Natural killer cell (primary cell): ENCODE measurements at regions of chr14 and their contacts with region 1.

Region 1: DNA sequence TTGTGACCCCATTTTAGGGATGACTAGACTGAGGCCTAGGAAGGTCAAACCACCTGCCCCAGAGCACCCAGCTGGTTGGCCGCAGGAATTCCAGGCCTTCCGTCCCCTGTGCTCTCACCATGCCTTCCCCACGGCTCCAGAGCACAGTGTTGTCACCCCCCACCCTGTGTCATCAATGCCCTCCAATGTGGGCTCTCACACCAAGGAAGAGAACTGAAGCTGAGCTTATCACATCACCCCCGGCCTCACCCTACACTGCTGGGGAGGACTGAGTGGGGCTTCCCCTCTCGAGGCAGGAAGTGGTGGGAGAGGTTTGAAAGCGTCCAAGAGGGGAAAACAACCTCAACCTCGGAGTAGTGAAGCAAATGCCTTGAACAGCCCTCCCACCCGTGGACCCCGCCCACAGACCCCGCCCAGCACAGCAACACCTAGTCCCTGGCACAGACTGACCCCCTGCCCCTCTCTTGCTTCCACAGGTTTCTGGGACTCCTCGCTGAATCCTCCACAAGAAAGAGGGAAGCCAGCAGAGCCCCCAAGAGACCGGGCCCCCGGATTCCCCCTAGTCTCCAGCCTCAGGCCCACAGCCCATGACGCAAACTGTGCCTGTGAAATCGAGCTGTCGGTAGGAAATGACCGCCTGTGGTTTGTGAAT is 97.2 kb downstream of the LGMN start:
- DNase-seq: peak; percentile 83 to 93
- ATAC-seq: peak; percentile 66 to 88 (median 77)
- H3K4me3 ChIP-seq: peak overlapping the region; percentile 72
- H3K4me3 Mint-ChIP-seq: peak overlapping the region; percentile 90
- H3K27ac ChIP-seq: peak overlapping the region; percentile 99
- H3K27ac Mint-ChIP-seq: peak overlapping the region; percentile 96 to 99
- H3K4me1 ChIP-seq: peaks cover 94% of the 10 kb centered on the region
- H3K4me1 Mint-ChIP-seq: peaks cover 75 to 95% of the 10 kb centered on the region in 2 donors
- H3K27me3 ChIP-seq: no peaks in the 10 kb centered on the region
- H3K27me3 Mint-ChIP-seq: no peaks in the 10 kb centered on the region
- CTCF ChIP-seq: no peak

Region 2: DNA sequence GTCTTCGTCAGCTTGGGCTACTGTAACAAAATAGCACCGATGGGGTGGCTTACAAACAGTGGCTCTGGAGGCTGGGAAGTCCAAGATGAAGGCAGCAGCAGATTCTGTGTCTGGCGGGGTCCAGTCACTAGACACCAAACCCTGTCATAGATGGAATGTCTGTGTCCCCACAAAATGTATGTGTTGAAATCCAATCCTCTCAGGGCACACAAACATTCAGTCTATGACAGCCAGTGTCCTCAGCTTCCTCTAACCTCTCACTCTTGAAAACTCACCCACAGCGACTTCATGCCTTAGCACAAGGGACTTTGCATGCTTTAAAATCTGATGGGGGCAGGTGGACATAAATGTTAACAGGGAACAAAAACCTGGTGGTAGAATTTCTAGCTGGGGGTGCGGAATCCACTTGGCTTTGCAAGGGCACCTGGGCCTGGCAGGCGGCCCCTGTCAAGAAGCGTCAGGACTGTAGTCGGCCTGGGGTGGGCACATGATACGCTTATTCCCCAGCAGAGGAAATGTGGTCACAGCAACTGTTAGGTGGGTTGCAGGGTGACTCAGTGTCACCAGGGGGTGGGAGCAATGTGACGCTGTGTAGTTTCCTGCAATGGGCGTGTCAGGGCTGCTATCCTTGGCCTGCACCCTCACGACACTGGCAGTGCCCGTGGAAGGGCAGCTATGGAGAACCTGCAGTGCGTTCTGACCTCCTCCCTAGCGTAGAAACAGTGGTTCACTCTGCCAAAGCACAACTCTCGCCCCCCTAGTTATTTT is 119.9 kb before region 1 on chr14:
- intact Hi-C with region 1: loop called (anchors 1 kb)
- DNase-seq: peak; percentile 86 to 91
- ATAC-seq: peak; percentile 76 to 93 (median 93)
- H3K4me3 ChIP-seq: no peak overlapping the region
- H3K4me3 Mint-ChIP-seq: peak overlapping the region; percentile 89
- H3K27ac ChIP-seq: peak overlapping the region; percentile 98
- H3K27ac Mint-ChIP-seq: peak overlapping the region; percentile 98 to 99
- H3K4me1 ChIP-seq: peaks cover 87% of the 10 kb centered on the region
- H3K4me1 Mint-ChIP-seq: peaks cover 75 to 92% of the 10 kb centered on the region in 2 donors
- H3K27me3 ChIP-seq: no peaks in the 10 kb centered on the region
- H3K27me3 Mint-ChIP-seq: no peaks in the 10 kb centered on the region
- CTCF ChIP-seq: no peak

Region 3: DNA sequence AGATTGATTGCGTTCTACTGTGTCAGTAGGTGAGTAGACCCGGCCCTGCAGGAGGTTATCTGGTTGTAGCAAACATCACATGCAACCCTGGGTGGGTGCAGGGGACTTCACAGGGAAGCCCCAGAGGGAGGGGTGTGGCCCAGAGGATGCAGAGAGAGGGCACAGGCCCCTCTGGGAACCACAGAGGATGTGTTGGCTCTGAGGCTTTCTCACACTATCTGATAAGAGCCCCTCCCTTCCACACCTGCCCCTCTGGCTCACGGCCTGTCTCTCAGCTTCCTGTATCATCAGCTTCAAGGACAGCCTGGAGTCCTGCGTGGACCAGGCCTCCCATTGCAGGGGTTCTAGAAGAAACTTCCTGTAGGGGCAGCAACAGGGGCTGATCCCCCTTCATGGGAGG is 35.8 kb before region 1 on chr14:
- intact Hi-C with region 1: loop called (anchors 1 kb)
- DNase-seq: peak; percentile 75 to 93
- ATAC-seq: peak; percentile 85 to 97 (median 93)
- H3K4me3 ChIP-seq: no peak overlapping the region
- H3K4me3 Mint-ChIP-seq: peak overlapping the region; percentile 87
- H3K27ac ChIP-seq: peak overlapping the region; percentile 99
- H3K27ac Mint-ChIP-seq: peak overlapping the region; percentile 97 to 100
- H3K4me1 ChIP-seq: peaks cover 63% of the 10 kb centered on the region
- H3K4me1 Mint-ChIP-seq: peaks cover 67 to 72% of the 10 kb centered on the region in 2 donors
- H3K27me3 ChIP-seq: no peaks in the 10 kb centered on the region
- H3K27me3 Mint-ChIP-seq: no peaks in the 10 kb centered on the region
- CTCF ChIP-seq: no peak

Region 4: DNA sequence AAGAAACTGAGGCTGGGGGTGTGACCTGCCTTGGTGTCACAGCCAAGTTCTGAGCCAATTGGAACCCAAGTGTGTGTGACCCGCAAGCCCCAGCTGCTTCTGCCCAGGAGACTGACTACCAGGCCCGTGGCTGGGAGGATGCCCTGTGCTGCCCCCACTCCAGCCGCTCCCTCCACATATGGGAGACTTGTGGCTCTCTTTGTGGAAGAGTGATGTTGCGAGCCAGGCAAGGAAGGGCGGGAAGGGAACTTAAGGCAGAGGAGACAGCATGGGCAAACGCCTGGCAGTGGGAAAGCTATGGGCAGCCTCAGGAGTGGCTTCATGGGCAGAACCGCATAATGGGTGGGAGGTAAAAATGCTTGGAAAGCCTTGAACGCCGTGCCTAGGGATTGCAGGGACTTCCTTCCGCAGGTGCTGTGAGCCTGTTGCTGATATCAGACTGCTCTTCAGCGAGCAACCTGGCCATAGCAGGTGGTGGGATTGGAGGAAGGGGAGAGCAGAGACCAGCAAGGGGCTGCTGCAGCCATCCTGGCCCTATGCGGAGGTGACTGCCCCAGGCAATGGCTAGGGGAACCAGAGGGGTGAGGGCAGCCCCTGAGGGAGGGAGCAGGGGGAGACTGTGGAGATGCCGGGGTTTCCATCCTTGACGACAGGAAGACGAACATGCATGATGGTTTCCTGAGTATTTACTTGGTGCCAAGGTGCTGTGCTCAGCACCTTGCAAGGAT is 18.5 kb before region 1 on chr14:
- intact Hi-C with region 1: no loop called
- DNase-seq: no peak
- ATAC-seq: peak in 2 of 3 donors; percentile 7 to 20
- H3K4me3 ChIP-seq: no peak overlapping the region
- H3K4me3 Mint-ChIP-seq: peak overlapping the region; percentile 13
- H3K27ac ChIP-seq: no peak overlapping the region
- H3K27ac Mint-ChIP-seq: peak overlapping the region; percentile 75 to 85
- H3K4me1 ChIP-seq: peaks cover 34% of the 10 kb centered on the region
- H3K4me1 Mint-ChIP-seq: peaks cover 33 to 58% of the 10 kb centered on the region in 2 donors
- H3K27me3 ChIP-seq: no peaks in the 10 kb centered on the region
- H3K27me3 Mint-ChIP-seq: no peaks in the 10 kb centered on the region
- CTCF ChIP-seq: no peak

Region 5: DNA sequence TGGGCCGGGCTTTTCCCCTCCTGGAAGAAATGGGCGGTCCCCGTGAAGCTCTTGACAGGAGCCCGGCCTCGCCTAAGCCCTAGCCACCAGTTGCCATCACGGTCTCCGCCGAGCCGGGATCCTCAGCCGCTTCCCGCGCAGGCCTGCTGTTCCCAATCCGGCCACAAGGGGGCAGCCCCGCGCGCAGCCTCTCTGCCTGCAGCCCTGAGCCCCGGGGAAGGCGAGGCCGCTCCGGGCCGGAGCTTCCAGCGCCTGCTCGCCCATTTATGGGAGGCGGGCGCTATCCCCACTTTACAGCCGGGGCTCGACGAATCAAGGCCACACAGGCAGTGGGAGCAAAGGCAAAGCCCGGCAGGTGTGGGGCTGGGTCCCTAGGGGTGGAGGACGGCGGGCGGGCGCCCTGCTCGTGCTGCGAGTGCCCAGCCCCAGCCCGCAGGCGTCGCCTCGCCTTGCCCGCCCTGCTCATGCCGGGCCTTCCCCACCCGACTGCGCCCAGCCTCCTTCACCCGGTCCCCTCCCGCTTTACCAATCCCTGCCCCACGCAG is 35.7 kb after region 1 on chr14:
- intact Hi-C with region 1: loop called (anchors 5 kb)
- DNase-seq: peak in 1 of 2 donors; percentile 74
- ATAC-seq: peak; percentile 78 to 85 (median 83)
- H3K4me3 ChIP-seq: no peak overlapping the region
- H3K4me3 Mint-ChIP-seq: no peak overlapping the region
- H3K27ac ChIP-seq: peak overlapping the region; percentile 12
- H3K27ac Mint-ChIP-seq: peak overlapping the region; percentile 69 to 73
- H3K4me1 ChIP-seq: peaks cover under 1% of the 10 kb centered on the region
- H3K4me1 Mint-ChIP-seq: peaks cover 4 to 16% of the 10 kb centered on the region in 2 donors
- H3K27me3 ChIP-seq: no peaks in the 10 kb centered on the region
- H3K27me3 Mint-ChIP-seq: no peaks in the 10 kb centered on the region
- CTCF ChIP-seq: peak; percentile 96